Activated CD8-positive, alpha-beta T cell treated with anti-CD3 and anti-CD28 coated beads for 36 hours (primary cell): ENCODE measurements at regions of chr2 and their contacts with region 1.

Region 1: DNA sequence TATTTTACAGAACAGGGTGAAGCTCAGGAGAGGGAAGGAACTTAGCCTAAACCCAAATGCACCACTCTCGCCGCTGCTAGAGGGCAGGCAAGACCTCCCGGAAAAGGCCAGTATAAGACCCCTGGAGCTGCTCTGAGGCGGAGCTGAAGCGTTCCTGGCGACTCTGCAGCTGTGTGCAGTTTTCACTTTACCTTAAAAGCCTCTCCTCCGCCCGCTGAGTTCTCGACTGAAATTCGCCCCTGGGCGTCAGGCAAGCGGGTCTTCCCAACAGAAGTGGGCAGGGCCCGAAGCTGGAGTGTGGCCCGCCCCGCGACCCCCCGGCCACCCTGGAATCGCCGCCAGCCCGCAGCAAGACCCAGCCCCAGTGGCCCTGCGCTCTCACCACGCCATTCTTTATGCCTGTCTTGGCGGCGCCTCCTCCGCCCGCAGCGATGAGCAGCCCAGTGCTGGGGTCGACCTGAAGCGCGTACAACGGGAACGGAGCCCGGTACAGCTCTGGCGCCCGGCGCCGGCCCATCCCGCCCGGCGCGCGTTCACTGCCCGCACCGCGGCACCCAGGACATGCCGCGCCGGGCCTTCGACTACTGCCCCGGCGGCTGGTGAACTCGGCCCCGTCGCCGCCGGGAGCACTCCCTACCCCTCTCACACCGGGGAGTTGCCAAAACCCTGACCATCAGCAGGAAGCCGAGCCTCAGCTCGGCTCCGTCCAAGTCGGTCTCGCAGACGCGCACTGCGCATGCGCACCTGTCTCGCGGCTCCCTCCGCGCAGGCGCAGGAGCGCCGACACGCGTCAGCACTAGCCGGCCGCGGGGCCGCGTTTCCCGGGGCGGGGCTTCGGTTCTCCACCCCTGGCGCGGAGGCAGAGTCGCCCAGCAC is at the start of gene PREB:
- DNase-seq: peak; percentile 98
- ATAC-seq: peak; percentile 99
- H3K4me3 Mint-ChIP-seq: peak within 1 kb of the TSS; percentile 88
- H3K27ac Mint-ChIP-seq: peak within 1 kb of the TSS; percentile 95
- H3K4me1 Mint-ChIP-seq: peaks cover 16% of the 10 kb centered on the region
- H3K27me3 Mint-ChIP-seq: no peaks in the 10 kb centered on the region
- CTCF ChIP-seq: no peak
- total RNA-seq, gene PREB: 60.5 to 63.2 TPM

Region 2: GRCh38 chr2:26692279-26692896 is 441.8 kb before region 1 on chr2 and contains the start of gene KCNK3:
- CTCF ChIA-PET with region 1: no interaction called
- POLR2A ChIA-PET with region 1: no interaction called
- intact Hi-C with region 1: no loop called
- DNase-seq: peak; percentile 52
- ATAC-seq: peak; percentile 94
- H3K4me3 Mint-ChIP-seq: no peak within 1 kb of the TSS
- H3K27ac Mint-ChIP-seq: no peak within 1 kb of the TSS
- H3K4me1 Mint-ChIP-seq: peaks cover 4% of the 10 kb centered on the region
- H3K27me3 Mint-ChIP-seq: peaks cover 43% of the 10 kb centered on the region
- CTCF ChIP-seq: no peak
- total RNA-seq, gene KCNK3: not detected

Region 3: DNA sequence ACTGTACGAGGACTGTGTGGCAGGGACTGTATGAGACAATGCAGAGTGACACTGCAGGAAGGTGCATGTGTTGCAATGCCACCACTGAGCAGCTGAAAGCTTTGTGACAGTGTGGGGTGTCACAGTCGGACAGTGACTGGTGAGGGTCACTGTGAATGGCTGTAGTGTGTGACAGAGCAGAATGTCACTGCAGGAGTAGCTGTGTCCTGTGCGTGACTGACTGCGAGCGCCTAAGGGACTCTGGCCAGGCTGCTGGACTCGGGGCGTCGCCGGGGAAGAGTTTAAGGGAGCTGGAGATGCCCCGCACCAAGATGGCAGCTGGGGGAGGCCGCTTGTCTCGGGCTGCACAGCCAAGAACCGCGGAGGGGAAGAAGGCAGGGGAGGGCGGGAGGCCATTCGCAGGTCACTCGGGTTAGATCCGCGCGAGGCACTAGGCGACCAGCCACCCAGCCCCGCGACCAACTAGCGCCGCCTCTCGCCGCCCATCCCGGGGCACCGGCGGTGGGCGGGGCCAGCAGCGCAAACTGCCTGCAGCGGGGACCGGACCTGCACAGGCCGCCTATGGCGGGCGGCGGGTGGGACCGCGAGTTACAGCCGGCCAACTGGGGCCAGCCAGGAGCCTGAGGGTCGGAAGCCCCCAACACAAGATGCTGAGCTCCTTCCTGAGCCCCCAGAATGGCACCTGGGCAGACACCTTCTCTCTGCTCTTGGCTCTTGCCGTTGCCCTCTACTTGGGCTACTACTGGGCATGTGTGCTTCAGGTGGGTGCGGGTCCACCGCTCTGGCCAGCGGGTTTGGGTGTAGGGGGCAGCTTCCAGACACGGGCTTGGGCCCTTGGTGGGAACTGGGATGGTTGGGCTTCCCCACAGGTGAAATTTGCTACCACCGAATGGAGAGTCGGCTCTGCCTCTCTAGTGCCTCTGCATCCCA is 10.6 kb before region 1 on chr2 and contains the start of gene ABHD1:
- CTCF ChIA-PET with region 1: interaction called, 10 read pairs
- POLR2A ChIA-PET with region 1: interaction called, 28 read pairs
- intact Hi-C with region 1: no loop called
- DNase-seq: peak; percentile 58
- ATAC-seq: peak; percentile 79
- H3K4me3 Mint-ChIP-seq: peak within 1 kb of the TSS; percentile 73
- H3K27ac Mint-ChIP-seq: peak within 1 kb of the TSS; percentile 72
- H3K4me1 Mint-ChIP-seq: peaks cover 14% of the 10 kb centered on the region
- H3K27me3 Mint-ChIP-seq: peaks cover 12% of the 10 kb centered on the region
- CTCF ChIP-seq: no peak
- total RNA-seq, gene ABHD1: 0.36 to 0.50 TPM

Region 4: DNA sequence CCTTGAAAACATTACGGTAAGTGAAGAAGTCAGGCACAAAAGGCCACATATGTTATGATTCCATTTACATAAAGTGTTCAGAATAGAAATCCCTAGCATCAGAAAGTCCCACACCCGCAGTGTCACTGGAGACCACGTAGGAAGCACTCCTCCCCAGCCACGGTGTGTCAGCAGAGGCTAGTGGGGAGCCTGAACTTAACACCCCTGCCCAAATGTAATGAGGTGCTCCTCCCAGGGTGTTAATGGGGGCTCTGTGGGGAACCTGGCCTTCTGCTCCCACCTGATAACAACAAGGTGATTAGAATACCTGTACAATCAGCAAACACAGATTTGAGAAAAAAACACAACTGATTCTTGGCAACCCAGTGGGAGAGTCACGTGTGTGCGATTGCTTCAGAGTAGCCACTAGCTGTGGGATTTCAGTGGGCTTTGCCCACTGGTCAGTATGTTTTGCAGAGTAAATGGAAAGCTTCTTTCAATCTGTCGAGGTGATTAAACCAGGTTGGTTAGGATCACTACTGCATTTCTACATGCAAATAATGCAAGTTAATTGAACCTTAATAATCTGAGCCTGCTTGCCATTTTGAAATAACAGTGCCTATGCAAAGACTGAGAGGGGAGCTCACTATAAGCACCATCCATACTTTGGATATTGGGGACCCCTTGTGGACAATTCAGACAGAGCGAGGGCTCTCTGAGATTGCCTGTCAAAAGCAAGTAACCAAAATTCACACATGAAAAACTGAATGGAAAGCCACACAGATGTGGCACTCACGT is 57.1 kb after region 1 on chr2:
- CTCF ChIA-PET with region 1: interaction called, 14 read pairs
- POLR2A ChIA-PET with region 1: no interaction called
- intact Hi-C with region 1: no loop called
- DNase-seq: peak; percentile 69
- ATAC-seq: peak; percentile 88
- H3K4me3 Mint-ChIP-seq: no peak overlapping the region
- H3K27ac Mint-ChIP-seq: no peak overlapping the region
- H3K4me1 Mint-ChIP-seq: no peaks in the 10 kb centered on the region
- H3K27me3 Mint-ChIP-seq: peaks cover 1% of the 10 kb centered on the region
- CTCF ChIP-seq: peak; percentile 67

Region 5: DNA sequence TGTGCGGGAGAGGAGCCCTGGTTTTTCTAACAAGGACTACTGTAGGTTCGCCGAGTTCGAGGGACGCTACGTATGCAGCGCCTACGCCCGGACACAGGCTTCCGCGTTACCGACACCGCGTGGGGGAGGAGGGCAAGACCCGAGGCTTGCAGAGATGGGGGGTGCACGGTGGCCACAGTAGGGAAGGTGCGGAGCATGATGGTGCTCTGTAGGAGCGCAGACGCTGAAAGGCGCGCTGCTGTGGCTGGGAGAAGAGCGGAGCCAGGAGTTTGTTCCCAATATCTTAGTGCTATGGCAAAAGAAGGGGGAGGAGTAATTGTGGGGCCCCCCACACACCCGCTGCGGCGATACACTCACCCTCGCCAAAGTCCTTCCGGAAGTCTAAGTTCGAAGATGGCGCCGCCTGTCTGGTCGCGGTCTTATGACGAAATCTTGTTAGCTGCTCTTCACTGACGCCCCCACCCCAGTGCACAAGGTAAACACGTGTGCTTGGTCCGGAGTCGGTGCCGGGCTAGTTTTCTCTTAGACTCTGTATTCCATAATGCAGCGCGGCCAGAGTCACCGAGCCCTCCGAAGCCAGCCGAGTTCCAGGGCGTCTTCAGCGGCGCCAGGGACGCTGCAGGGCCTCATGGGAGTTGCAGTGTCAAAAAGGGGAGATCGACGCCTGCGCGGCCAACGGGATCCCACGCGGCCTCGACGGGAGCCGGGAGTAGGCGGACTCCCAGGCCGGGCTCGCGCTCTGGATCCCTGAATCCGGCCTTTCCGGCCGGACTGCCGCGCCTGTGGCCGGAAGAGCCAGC is 222.4 kb after region 1 on chr2 and contains the start of gene GTF3C2:
- CTCF ChIA-PET with region 1: no interaction called
- POLR2A ChIA-PET with region 1: no interaction called
- intact Hi-C with region 1: no loop called
- DNase-seq: peak; percentile 98
- ATAC-seq: peak; percentile 79
- H3K4me3 Mint-ChIP-seq: peak within 1 kb of the TSS; percentile 94
- H3K27ac Mint-ChIP-seq: peak within 1 kb of the TSS; percentile 99
- H3K4me1 Mint-ChIP-seq: peaks cover 48% of the 10 kb centered on the region
- H3K27me3 Mint-ChIP-seq: no peaks in the 10 kb centered on the region
- CTCF ChIP-seq: no peak
- total RNA-seq, gene GTF3C2: 57.6 to 63.6 TPM